ENCODE measurements at regions of chr4 and their contacts with region 1.

Region 1: DNA sequence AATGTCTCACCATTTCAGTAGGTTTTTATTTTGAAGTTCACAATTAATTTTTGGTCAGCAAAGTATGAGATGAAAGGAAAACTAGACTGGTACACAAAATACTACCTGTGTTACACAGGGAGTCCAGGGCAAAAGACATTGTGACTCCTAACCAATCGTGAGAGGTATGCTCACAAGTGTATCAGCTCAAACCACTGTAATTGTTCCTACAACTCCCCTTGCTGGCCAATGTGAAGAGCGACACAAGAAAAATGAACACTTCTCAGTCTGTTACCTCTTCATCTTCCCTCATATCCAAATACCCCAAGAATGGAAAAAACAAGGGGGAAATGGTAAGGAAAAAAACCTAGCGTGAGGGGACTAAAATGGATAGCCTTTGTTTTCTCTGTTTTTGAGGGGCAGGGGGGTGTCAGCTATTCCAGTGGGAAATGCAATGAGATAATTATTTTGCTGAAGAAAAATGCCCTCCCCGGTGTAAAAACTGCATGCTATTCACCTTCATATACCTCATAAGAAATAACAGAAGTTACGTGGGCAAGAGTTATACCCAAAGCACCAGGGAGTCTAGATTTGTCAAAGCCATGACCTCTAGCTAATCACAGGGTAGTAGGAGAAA is 30.6 kb upstream of the NSUN7 start:
- DNase-seq: peak; percentile 64
- ATAC-seq: peak; percentile 76
- H3K4me3 ChIP-seq: no peak overlapping the region
- H3K27ac ChIP-seq: no peak overlapping the region
- H3K4me1 ChIP-seq: peaks cover 2% of the 10 kb centered on the region; the same call in 1 of the 2 replicates
- H3K27me3 ChIP-seq: peaks cover 3% of the 10 kb centered on the region; the same call in 1 of the 2 replicates
- CTCF ChIP-seq: peak; percentile 60
- POLR2A ChIP-seq: no peak
- RAD21 ChIP-seq: peak; percentile 69

Region 2: GRCh38 chr4:40325189-40326019 is 393.7 kb before region 1 on chr4:
- CTCF ChIA-PET with region 1: no interaction called
- POLR2A ChIA-PET with region 1: no interaction called
- dilution Hi-C with region 1: no loop called
- in situ Hi-C with region 1: no loop called
- intact Hi-C with region 1: loop called (anchors 5 kb)
- DNase-seq: peak; percentile 72
- ATAC-seq: peak; percentile 77
- H3K4me3 ChIP-seq: no peak overlapping the region
- H3K27ac ChIP-seq: no peak overlapping the region
- H3K4me1 ChIP-seq: peaks cover 4% of the 10 kb centered on the region; the same call in 1 of the 2 replicates
- H3K27me3 ChIP-seq: peaks cover 4% of the 10 kb centered on the region; the same call in 1 of the 2 replicates
- CTCF ChIP-seq: peak; percentile 76
- POLR2A ChIP-seq: no peak
- RAD21 ChIP-seq: peak; percentile 77

Region 3: GRCh38 chr4:40699648-40700047 is 19.5 kb before region 1 on chr4:
- CTCF ChIA-PET with region 1: no interaction called
- POLR2A ChIA-PET with region 1: no interaction called
- dilution Hi-C with region 1: no loop called
- in situ Hi-C with region 1: no loop called
- intact Hi-C with region 1: no loop called
- DNase-seq: peak; percentile 56
- ATAC-seq: no peak
- H3K4me3 ChIP-seq: no peak overlapping the region
- H3K27ac ChIP-seq: no peak overlapping the region
- H3K4me1 ChIP-seq: no peaks in the 10 kb centered on the region
- H3K27me3 ChIP-seq: no peaks in the 10 kb centered on the region
- CTCF ChIP-seq: no peak
- POLR2A ChIP-seq: no peak
- RAD21 ChIP-seq: no peak

Region 4: GRCh38 chr4:40800064-40800463 is 80.9 kb after region 1 on chr4:
- CTCF ChIA-PET with region 1: no interaction called
- POLR2A ChIA-PET with region 1: interaction called, 3 read pairs
- dilution Hi-C with region 1: no loop called
- in situ Hi-C with region 1: loop called (anchors 25 kb)
- intact Hi-C with region 1: no loop called
- DNase-seq: no peak
- ATAC-seq: no peak
- H3K4me3 ChIP-seq: no peak overlapping the region
- H3K27ac ChIP-seq: no peak overlapping the region
- H3K4me1 ChIP-seq: no peaks in the 10 kb centered on the region
- H3K27me3 ChIP-seq: peaks cover 8% of the 10 kb centered on the region
- CTCF ChIP-seq: no peak
- POLR2A ChIP-seq: no peak
- RAD21 ChIP-seq: no peak